PC-3 (cell line): ENCODE measurements at regions of chr15 and their contacts with region 1.

Region 1: GRCh38 chr15:56365075-56365711 is at the start of gene TEX9:
- DNase-seq: peak; percentile 77
- ATAC-seq: peak; percentile 98
- H3K4me3 ChIP-seq: peak within 1 kb of the TSS; percentile 97
- H3K27ac ChIP-seq: no peak within 1 kb of the TSS
- H3K4me1 ChIP-seq: no peaks in the 10 kb centered on the region
- H3K27me3 ChIP-seq: no peaks in the 10 kb centered on the region
- CTCF ChIP-seq: no peak
- total RNA-seq, gene TEX9: 2.4 and 3.3 TPM in 2 replicates

Region 2: GRCh38 chr15:56428821-56429458 is 63.7 kb after region 1 on chr15:
- CTCF ChIA-PET with region 1: no interaction called
- POLR2A ChIA-PET with region 1: no interaction called
- intact Hi-C with region 1: loop called (anchors 2 kb)
- DNase-seq: peak; percentile 53
- ATAC-seq: no peak
- H3K4me3 ChIP-seq: no peak overlapping the region
- H3K27ac ChIP-seq: no peak overlapping the region
- H3K4me1 ChIP-seq: no peaks in the 10 kb centered on the region
- H3K27me3 ChIP-seq: no peaks in the 10 kb centered on the region
- CTCF ChIP-seq: peak; percentile 66